ENCODE measurements at regions of chr19 and their contacts with region 1.

Region 1: DNA sequence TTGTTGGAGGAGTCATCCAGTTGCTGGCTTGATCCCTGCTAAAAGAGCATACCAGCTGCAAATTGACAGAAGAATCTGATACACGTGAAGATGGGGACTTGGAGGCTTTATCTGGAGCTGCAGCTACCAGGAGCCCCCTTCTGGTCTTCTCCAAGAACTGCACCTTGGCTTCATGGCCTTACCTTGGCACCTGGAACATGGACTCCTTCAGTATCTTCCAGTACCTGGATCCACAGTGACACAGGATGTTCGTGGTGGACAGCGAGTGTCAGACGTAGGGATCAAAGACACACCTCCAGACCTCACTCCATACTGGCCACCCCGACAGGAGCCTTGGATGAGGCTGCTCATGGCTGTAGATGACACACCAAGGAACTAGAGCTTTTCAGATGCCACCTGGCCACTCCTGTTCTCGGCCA is 9.9 kb upstream of the ACSBG2 start:
- DNase-seq: peak; percentile 68
- H3K4me3 Mint-ChIP-seq: no peak overlapping the region
- H3K27ac Mint-ChIP-seq: no peak overlapping the region
- H3K4me1 Mint-ChIP-seq: peaks cover 3% of the 10 kb centered on the region
- H3K27me3 Mint-ChIP-seq: no peaks in the 10 kb centered on the region

Region 2: DNA sequence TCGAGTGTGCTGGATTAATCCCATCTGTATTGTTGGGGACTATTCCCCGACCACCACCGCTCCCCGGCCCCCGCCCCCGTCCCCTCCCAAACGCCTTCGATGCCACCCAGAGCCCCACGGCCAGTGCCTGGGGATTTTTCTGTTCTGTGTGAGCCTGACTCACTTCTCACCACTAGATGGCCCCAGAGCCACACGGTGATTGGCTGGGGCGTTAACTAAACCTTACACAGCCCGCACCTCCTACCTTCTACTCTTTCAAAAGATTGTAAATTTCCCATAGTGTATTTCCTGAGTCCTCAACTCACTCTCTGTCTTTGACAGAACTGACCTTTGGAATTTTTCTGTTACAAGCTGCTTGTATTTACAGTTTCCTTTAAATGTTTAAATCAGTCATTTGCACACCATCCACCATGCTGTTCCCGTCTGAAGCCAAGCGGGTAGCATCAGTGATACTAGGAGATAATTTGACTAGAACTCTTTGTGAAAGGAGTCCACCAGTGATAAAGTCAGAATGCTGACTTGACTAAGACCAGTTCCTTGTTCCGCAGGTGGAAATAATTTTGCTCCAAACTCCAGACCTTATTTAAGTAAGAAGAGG is 76.7 kb before region 1 on chr19:
- CTCF ChIA-PET with region 1: interaction called, 14 read pairs
- POLR2A ChIA-PET with region 1: no interaction called
- DNase-seq: peak; percentile 85
- H3K4me3 Mint-ChIP-seq: no peak overlapping the region
- H3K27ac Mint-ChIP-seq: no peak overlapping the region
- H3K4me1 Mint-ChIP-seq: peaks cover 4% of the 10 kb centered on the region
- H3K27me3 Mint-ChIP-seq: peaks cover 6% of the 10 kb centered on the region

Region 3: GRCh38 chr19:6105444-6105843 is 20.1 kb before region 1 on chr19:
- CTCF ChIA-PET with region 1: no interaction called
- POLR2A ChIA-PET with region 1: no interaction called
- DNase-seq: no peak
- H3K4me3 Mint-ChIP-seq: no peak overlapping the region
- H3K27ac Mint-ChIP-seq: no peak overlapping the region
- H3K4me1 Mint-ChIP-seq: peaks cover 22% of the 10 kb centered on the region
- H3K27me3 Mint-ChIP-seq: peaks cover 19% of the 10 kb centered on the region